ENCODE measurements at regions of chr11 and their contacts with region 1.

Region 1: DNA sequence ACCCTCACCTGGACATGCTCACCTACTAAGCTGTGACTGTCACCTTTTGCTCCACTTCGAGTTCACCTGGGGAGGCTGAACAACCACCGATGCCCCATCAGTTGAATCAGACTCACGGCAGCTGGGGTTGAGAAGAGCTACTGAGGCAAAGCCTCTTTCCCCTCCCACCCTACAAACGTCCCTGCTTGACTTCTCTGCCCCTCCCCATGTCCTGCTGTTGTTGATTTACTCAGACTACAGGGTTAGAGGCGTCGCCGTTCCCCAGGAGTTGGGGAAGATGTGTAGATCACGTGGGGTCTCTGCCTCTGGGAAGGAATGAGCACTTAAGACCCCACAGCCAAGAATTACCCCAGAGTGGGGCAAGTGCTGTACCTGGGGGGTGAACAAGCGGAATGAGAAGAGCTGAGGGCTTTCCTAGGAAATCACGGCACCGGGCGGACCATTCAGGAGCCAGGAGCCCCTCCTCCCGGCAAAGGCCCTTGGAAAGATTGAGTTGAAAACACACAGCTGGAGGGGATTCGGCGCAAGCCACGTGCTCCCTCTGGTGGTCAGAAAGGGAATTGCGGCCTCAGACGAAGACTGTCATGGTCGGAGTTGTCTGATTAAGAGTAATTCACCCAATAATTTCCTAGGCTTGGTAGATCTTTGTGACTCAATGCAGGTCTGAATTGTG is 7.0 kb downstream of the FXYD2 start:
- DNase-seq: peak; percentile 70
- CTCF ChIP-seq: peak; percentile 96

Region 2: DNA sequence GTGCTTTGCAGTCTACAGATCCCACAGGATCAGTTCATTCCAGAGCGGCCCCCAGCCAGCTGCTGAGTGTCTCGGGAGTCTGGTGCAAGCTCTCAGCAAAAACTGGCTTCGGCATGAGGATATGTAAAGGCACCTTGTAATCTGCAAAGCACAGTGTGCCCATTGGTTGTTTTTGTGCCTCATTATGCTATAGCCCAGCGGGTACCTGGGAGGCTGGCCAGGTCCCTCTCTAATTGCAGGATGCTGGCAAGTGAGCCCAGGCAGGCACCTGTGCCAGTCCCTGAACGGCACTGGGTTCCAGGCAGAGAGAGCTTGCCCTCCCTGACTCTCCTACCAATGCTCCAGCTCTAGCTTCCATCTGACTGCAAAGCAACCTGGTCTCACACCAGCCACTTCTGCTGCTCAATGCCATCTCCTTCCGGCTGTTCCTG is 149.2 kb before region 1 on chr11:
- CTCF ChIA-PET with region 1: no interaction called
- POLR2A ChIA-PET with region 1: no interaction called
- DNase-seq: no peak
- CTCF ChIP-seq: no peak

Region 3: DNA sequence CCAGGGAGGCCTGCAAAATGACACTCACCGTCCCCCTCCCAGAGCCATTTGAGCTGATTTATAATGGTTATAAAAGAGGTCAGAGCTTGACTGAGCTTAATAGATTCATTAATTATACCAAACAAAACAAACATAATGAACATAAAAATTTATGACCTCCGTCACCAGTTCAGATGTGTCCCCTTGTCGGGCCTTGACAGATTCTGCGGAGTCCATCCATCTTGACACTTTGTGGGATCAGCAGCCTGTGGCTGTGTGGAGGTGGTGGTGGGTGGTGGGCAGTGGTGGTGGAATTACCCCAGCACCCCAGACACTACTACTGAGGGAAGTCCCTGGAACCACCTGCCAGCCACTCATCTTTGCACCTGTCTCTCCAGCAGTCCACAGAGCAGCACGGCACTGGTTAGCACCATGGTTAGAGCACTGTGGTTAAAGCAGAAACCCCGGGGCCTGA is 103.9 kb before region 1 on chr11:
- CTCF ChIA-PET with region 1: no interaction called
- POLR2A ChIA-PET with region 1: no interaction called
- DNase-seq: no peak
- CTCF ChIP-seq: no peak

Region 4: DNA sequence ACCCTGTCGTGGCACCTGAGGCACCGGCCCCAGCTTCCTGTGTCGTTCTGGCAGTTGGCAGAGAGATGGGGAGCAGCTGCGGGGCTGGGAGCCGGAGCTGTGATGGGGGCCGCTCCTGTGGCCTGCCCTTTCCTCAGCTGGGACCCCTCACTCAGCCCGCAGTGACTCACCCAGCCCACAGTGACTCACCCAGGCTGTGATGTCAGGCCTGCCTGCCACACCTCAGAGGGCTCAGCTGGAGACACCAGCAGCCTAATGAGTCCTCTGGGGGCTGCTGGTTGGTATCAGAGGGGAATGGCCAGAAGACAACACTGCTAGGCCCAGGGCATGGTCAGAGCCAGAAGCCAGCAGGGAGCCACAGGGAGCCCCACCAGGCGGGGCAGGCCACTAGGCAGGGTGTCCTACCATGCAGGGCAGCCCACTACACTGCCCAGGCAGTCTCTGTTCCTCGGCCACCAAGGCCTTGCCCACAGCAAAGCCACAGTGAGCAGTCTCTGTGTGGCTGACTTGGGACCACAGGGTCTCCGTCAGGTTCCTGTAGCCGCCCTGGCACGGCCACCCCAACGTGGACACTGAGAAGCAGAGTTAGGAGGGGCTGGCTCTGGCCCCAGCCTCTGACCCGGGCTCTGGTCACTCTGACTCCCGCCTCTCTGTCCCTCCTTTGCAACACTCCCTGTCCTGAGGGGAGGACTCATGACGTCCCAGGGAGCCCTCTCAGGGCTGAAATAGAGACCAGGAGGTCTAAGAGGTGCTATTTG is 11.3 kb after region 1 on chr11:
- CTCF ChIA-PET with region 1: interaction called, 84 read pairs
- POLR2A ChIA-PET with region 1: no interaction called
- DNase-seq: peak; percentile 76
- CTCF ChIP-seq: no peak

Region 5: GRCh38 chr11:117953024-117953671 is 135.6 kb after region 1 on chr11:
- CTCF ChIA-PET with region 1: interaction called, 117 read pairs
- POLR2A ChIA-PET with region 1: no interaction called
- DNase-seq: no peak
- CTCF ChIP-seq: no peak

Measured in GM10248 (cell line).